ENCODE measurements at regions of chr3 and their contacts with region 1.

Region 1: DNA sequence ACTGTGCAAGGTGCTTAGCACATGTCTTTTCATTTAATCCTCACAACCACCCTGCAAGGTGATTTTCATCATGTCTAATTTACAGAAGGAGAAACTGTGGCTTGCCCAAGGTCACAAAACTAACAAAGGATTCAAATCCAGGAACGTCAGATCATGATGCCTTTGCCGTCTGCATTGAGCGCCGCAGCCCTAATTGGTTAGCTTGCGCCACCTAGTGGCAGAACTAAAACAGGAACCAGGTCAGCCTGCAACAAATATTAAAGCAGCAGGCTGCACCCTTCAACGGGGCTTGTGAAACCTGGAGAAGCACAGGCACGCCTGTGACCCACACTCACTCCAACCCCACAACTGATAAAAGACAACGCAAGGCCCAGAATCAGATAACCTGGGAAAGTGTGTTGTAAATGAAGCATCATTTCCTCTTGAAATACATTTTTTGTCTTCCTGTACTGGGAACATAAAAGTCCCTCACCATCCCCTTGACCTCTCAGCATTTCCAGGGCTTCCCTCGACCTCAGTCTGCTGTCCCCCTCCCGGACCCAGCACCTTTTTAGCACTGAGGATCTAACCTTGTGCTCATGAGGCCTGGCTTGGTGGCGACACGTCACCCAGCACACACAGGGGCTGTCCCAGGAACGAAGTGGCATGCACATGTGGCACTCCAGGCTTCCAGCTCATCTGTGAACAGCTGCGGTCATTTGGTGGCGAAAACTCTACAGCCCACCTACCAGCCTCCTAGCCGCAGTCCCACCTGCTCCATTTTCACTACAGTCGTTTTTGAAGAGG is 17.3 kb downstream of the DPH3 start:
- DNase-seq: peak; percentile 61 to 78
- ATAC-seq: peak; percentile 39 to 60
- H3K4me3 ChIP-seq: no peak overlapping the region
- H3K27ac ChIP-seq: no peak overlapping the region
- H3K4me1 ChIP-seq: peaks cover 26 to 27% of the 10 kb centered on the region in 2 donors
- H3K27me3 ChIP-seq: no peaks in the 10 kb centered on the region
- CTCF ChIP-seq: peak; percentile 79 to 98 (median 95)
- POLR2A ChIP-seq: no peak

Region 2: GRCh38 chr3:15629860-15630597 is 617.4 kb before region 1 on chr3:
- in situ Hi-C with region 1: loop called in 3 of 4 experiments (anchors 10 to 25 kb)
- intact Hi-C with region 1: loop called (anchors 2 kb)
- DNase-seq: peak; percentile 69 to 76
- ATAC-seq: peak; percentile 91 to 93
- H3K4me3 ChIP-seq: peak overlapping the region; percentile 24 to 50 (median 37)
- H3K27ac ChIP-seq: peak overlapping the region; percentile 77 to 90 (median 84)
- H3K4me1 ChIP-seq: peaks cover 25 to 27% of the 10 kb centered on the region in 2 donors
- H3K27me3 ChIP-seq: no peaks in the 10 kb centered on the region
- CTCF ChIP-seq: peak; percentile 77 to 85 (median 78)
- POLR2A ChIP-seq: no peak

Region 3: DNA sequence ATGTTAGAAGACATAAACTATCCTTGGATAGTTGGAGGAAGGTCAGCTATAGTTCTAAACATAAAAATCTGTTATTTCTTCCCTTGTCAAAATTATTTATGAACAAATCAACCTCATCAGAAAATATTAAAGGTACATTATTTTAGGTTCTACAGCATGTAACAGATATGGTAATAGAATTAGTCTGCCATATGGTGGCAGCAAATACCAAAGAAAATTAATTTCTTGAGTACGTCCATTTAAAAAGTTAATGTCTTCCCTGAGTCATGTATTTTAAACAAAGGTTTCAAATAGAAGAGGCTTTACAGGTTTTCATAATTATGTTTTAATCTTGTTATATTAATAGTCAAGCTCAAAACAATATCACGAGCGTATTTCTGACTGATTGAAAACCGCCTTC is 431.8 kb before region 1 on chr3:
- in situ Hi-C with region 1: loop called in 3 of 4 experiments (anchors 10 to 25 kb)
- intact Hi-C with region 1: loop called (anchors 1 kb)
- DNase-seq: no peak
- ATAC-seq: peak; percentile 74 to 85
- H3K4me3 ChIP-seq: no peak overlapping the region
- H3K27ac ChIP-seq: peak overlapping the region in 2 of 4 donors; percentile 37 to 42
- H3K4me1 ChIP-seq: peaks cover 8 to 18% of the 10 kb centered on the region in 2 donors
- H3K27me3 ChIP-seq: no peaks in the 10 kb centered on the region
- CTCF ChIP-seq: peak in 3 of 5 experiments; percentile 43 to 78 (median 55)
- POLR2A ChIP-seq: no peak

Region 4: DNA sequence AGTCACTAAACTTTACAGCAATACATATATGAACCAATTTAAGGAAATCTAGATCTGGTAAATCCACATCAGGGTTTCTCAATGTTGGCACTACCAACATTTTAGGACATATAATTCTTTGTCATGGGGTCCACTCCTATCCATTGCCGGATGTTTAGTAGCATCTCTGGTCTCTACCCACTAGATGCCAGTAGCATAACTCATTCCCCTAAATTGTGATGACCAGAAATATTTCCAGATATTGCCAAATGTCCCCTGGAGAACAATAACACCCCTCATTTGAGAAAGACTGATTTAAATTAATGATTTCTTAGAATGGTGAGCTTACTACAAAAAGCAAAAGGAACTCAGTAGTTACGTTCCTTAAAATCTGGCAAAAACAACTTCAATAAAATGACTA is 426.6 kb before region 1 on chr3:
- in situ Hi-C with region 1: loop called in 3 of 4 experiments (anchors 10 to 25 kb)
- intact Hi-C with region 1: no loop called
- DNase-seq: no peak
- ATAC-seq: no peak
- H3K4me3 ChIP-seq: no peak overlapping the region
- H3K27ac ChIP-seq: no peak overlapping the region
- H3K4me1 ChIP-seq: peaks cover 20 to 24% of the 10 kb centered on the region in 2 donors
- H3K27me3 ChIP-seq: no peaks in the 10 kb centered on the region
- CTCF ChIP-seq: no peak
- POLR2A ChIP-seq: no peak

Region 5: DNA sequence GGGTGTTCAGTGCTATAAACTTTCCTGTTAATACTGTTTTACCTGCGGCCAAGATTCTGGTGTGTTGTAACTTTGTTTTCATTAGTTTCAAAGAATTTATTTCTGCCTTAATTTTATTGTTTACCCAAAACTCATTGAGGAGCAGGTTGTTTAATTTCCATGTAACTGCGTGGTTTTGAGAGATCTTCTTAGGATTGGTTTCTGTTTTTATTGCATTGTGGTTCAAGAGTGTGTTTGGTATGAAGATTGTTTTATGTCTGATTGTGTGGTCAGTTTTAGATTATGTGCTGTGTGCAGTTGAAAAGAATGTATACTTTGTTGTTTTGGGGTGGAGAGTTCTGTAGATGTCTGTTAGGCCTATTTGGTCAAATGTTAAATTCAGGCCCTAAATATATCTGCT is 206.5 kb before region 1 on chr3:
- in situ Hi-C with region 1: loop called in 1 of 4 experiments (anchors 5 kb)
- intact Hi-C with region 1: no loop called
- DNase-seq: no peak
- ATAC-seq: no peak
- H3K4me3 ChIP-seq: no peak overlapping the region
- H3K27ac ChIP-seq: peak overlapping the region in 1 of 4 donors; percentile 35
- H3K4me1 ChIP-seq: no peaks in the 10 kb centered on the region
- H3K27me3 ChIP-seq: no peaks in the 10 kb centered on the region
- CTCF ChIP-seq: no peak
- POLR2A ChIP-seq: no peak

Region 6: GRCh38 chr3:16177962-16178627 is 69.4 kb before region 1 on chr3:
- in situ Hi-C with region 1: loop called in 1 of 4 experiments (anchors 10 kb)
- intact Hi-C with region 1: loop called (anchors 2 kb)
- DNase-seq: peak; percentile 56 to 77
- ATAC-seq: peak; percentile 12 to 47
- H3K4me3 ChIP-seq: peak overlapping the region; percentile 51 to 66 (median 64)
- H3K27ac ChIP-seq: peak overlapping the region in 3 of 4 donors; percentile 77 to 84 (median 82)
- H3K4me1 ChIP-seq: peaks cover 10 to 33% of the 10 kb centered on the region in 2 donors
- H3K27me3 ChIP-seq: no peaks in the 10 kb centered on the region
- CTCF ChIP-seq: peak; percentile 94 to 99 (median 97)
- POLR2A ChIP-seq: no peak

Region 7: DNA sequence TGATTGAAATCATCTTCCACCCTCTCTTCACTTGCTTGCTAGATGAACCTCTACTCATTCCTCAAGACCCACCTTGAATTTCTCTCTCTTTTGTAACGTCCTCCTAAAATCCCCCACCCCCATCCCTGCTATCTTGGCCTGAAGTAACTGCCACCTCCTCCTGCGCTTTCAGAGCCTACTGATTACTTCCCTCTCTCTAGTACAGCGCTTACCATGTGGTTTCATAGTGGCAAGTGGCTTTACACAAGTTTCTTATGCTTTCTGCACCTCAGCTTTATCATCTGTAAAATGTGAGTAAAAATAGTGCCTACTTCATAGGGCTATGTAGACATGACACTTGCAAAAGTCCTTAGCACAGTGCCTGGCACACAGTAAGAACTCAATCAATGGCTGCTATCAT is 386.5 kb after region 1 on chr3:
- in situ Hi-C with region 1: no loop called
- intact Hi-C with region 1: no loop called
- DNase-seq: no peak
- ATAC-seq: no peak
- H3K4me3 ChIP-seq: no peak overlapping the region
- H3K27ac ChIP-seq: no peak overlapping the region
- H3K4me1 ChIP-seq: peaks cover 6 to 8% of the 10 kb centered on the region in 2 donors
- H3K27me3 ChIP-seq: no peaks in the 10 kb centered on the region
- CTCF ChIP-seq: no peak
- POLR2A ChIP-seq: no peak